Right lobe of liver (tissue), 6 donors: ENCODE measurements at regions of chr1 and their contacts with region 1.

Region 1: DNA sequence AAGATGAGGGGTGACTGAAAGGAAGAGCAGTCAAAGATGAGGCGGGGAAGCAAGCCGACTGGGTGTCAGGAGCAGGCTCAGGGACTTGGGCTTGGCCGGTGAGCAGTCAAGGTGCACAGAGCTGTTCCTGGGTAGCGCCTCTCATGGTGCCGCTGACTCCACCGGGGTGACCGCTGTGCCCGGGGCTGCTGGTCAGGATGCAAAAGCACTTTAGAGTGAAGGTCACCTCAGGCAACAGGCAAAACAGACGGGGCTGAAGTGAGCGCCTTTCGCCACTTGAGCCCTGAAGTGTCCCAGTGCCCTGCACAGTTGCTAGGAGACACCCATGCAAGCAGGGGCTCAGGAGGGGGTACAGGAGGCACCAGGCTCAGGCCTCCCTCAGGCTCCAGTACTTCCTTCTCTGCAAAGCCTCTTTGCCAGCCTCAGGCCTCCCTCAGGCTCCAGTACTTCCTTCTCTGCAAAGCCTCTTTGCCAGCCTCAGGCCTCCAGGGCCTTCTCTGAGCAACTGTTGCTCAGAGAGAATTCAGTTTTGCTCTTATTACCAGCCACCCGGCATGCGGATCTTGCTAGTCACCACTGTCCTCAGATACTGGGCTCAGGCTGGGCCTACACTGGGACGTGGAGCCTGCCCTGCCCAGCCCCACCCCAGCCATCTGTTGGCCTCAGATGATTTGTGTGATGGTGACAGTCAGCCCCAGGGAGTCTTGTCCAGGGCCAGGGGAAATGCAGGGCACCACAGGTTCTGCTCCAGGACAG is 99.7 kb upstream of the IRF2BP2 start:
- DNase-seq: no peak
- ATAC-seq: peak in 2 of 4 donors; percentile 3 to 16
- H3K4me3 ChIP-seq: no peak overlapping the region
- H3K27ac ChIP-seq: no peak overlapping the region
- H3K4me1 ChIP-seq: peaks cover 0 to 25% (median 8%) of the 10 kb centered on the region in 4 donors
- H3K27me3 ChIP-seq: no peaks in the 10 kb centered on the region
- CTCF ChIP-seq: no peak
- POLR2A ChIP-seq: no peak

Region 2: DNA sequence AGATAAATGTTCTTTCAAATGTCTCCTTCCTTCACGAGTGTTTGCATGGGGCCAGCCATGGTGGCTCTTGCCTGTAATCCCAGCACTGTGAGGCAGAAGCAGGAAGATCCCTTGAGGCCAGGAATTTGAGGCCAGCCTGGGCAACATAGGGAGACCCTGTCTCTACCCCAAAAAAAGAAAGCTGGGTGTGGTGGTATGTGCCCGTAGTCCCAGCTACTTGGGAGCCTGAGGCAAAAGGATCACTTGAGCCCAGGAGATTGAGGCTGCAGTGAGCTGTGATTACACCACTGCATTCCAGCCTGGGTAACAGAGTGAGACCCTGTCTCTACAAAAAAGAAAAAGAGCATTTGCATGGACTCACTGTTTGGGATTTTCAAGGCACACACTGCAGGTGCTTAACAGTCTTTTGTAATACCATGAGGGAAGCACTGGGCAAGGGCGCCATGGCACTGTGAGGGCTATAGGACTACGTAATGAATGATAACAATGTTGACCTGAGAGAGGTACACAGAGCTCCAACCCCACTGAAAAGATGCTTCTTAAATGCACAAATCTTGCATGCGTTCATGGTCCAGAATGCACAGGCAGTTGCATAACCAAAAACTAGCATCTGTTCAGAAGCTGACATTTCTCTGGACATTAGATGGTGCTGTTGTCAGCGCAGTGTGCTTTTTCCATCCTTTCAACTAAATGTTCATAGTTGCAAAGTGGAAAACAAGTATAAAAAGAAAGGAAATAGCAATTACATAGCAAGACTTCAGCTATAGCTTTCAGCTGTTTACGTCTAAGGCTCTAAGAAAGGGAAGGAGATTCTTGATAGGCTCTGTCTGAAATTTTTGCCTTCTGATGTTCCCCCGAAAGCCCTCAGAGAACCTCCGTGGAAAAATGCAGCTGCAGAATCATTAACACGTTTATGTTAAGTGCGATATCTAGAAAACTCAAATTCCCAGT is 222.9 kb before region 1 on chr1:
- intact Hi-C with region 1: no loop called
- DNase-seq: peak in 1 of 3 donors; percentile 55
- ATAC-seq: peak; percentile 91 to 96 (median 93)
- H3K4me3 ChIP-seq: no peak overlapping the region
- H3K27ac ChIP-seq: no peak overlapping the region
- H3K4me1 ChIP-seq: no peaks in the 10 kb centered on the region
- H3K27me3 ChIP-seq: no peaks in the 10 kb centered on the region
- CTCF ChIP-seq: peak; percentile 76 to 83 (median 80)
- POLR2A ChIP-seq: no peak

Region 3: DNA sequence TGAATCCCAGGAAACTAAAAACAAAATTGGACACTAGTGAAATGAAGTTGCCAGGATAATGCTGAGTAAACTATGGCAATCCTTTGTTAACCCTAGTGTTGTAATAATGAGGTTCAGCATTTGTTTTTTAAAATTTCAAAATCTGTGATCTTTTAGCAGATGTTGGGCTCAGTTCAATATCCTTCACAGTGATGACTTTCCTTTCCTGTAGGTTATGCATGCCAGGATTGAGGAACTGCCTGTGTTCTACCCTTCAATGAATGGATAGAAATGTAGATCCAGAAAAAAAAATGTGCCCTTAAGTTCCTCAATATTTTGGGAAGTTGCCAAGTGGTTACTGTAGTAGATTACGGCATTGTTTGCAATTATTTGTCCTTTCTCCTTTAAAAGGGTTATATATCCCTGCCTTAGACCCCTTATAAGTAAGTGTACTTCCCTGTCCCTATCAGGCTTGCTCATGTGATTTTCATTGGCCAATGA is 64.1 kb before region 1 on chr1:
- intact Hi-C with region 1: loop called in 1 of 2 experiments (anchors 10 kb)
- DNase-seq: no peak
- ATAC-seq: peak; percentile 2 to 38 (median 18)
- H3K4me3 ChIP-seq: no peak overlapping the region
- H3K27ac ChIP-seq: peak overlapping the region; percentile 14 to 74 (median 61)
- H3K4me1 ChIP-seq: peaks cover 0 to 30% (median 12%) of the 10 kb centered on the region in 4 donors
- H3K27me3 ChIP-seq: no peaks in the 10 kb centered on the region
- CTCF ChIP-seq: no peak
- POLR2A ChIP-seq: no peak